ENCODE measurements at regions of chr15 and their contacts with region 1.

Region 1: DNA sequence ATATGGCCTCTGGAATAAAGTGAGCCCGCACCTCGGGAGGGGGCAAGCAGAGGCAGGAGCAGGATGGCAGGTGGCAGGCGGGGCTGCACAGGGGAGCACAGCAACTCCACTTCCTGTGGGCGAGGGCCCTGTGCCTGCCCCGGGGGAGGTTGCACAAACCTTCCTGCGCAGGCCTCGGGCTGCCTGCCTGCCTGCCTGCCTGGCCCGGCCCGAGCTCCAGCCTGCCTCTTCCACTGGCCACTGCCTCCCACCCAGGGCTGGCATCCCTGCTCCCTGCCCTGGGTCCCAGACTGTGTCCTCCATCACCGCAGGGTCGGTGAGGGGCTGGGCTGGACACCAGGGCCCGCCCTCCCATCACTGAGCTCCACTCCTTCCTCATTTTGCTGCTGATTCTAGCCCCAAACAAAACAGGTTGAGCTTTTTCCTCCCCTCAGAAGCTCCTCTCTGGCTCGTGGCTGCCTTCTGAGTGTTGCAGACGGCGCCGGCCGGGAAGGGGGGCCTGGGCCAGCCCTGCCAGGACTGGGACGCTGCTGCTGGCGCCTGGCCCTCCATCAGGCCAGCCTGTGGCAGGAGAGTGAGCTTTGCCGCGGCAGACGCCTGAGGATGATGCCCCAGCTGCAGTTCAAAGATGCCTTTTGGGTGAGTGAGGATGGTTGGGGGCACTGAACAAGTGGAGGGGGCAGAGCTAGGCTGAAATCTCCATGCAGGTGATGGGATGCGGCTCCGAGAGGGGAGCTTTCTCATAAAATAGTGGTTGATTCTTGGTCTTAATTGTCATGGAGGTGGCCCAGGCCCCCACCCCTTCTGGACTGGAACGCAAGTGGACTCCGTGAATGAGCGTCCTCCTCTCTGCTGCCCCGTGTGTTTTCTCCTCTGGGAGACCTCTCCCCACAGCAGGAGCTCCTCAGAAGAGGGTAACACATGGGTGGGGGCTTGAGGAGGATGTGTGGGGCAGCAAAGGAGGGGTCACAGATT is at the start of gene PSTPIP1:
- DNase-seq: peak; percentile 78
- ATAC-seq: peak; percentile 81
- H3K4me3 Mint-ChIP-seq: peak within 1 kb of the TSS; percentile 95
- H3K27ac Mint-ChIP-seq: peak within 1 kb of the TSS; percentile 95
- H3K4me1 Mint-ChIP-seq: peaks cover 55% of the 10 kb centered on the region
- H3K27me3 Mint-ChIP-seq: no peaks in the 10 kb centered on the region
- total RNA-seq, gene PSTPIP1: 238 to 241 TPM

Region 2: GRCh38 chr15:76931397-76932007 is 63.8 kb before region 1 on chr15 and contains the start of gene RCN2:
- POLR2A ChIA-PET with region 1: interaction called, 10 read pairs
- DNase-seq: peak; percentile 95
- ATAC-seq: peak; percentile 99
- H3K4me3 Mint-ChIP-seq: peak within 1 kb of the TSS; percentile 91
- H3K27ac Mint-ChIP-seq: peak within 1 kb of the TSS; percentile 90
- H3K4me1 Mint-ChIP-seq: peaks cover 28% of the 10 kb centered on the region
- H3K27me3 Mint-ChIP-seq: no peaks in the 10 kb centered on the region
- total RNA-seq, gene RCN2: 29.6 TPM

Region 3: GRCh38 chr15:76973362-76973743 is 21.9 kb before region 1 on chr15:
- POLR2A ChIA-PET with region 1: interaction called, 17 read pairs
- DNase-seq: peak; percentile 67
- ATAC-seq: peak; percentile 58
- H3K4me3 Mint-ChIP-seq: no peak overlapping the region
- H3K27ac Mint-ChIP-seq: no peak overlapping the region
- H3K4me1 Mint-ChIP-seq: peaks cover 27% of the 10 kb centered on the region
- H3K27me3 Mint-ChIP-seq: peaks cover 6% of the 10 kb centered on the region

Region 4: DNA sequence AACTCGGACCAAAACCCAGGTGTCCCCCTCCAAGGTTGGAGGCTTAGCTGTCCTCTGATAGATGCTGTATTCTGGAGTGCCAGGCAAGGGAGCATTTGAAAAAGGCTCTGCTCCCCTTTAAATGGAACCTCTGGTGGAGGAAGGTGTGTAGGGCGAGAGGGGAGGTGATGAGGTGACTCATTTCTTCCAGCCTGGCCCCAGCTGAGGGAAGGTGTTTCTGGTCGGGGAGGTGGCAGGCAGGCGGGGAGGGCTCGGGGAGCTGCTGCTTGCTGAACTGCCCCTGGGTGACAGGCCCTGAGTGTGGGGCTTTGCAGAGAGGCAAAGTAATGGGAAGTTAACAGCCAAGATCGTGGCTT is 18.5 kb after region 1 on chr15:
- POLR2A ChIA-PET with region 1: interaction called, 137 read pairs
- DNase-seq: peak; percentile 81
- ATAC-seq: peak; percentile 76
- H3K4me3 Mint-ChIP-seq: peak overlapping the region; percentile 88
- H3K27ac Mint-ChIP-seq: peak overlapping the region; percentile 96
- H3K4me1 Mint-ChIP-seq: peaks cover 78% of the 10 kb centered on the region
- H3K27me3 Mint-ChIP-seq: no peaks in the 10 kb centered on the region

Region 5: GRCh38 chr15:77024271-77025082 is 29.2 kb after region 1 on chr15:
- POLR2A ChIA-PET with region 1: interaction called, 49 read pairs
- DNase-seq: peak; percentile 82
- ATAC-seq: no peak
- H3K4me3 Mint-ChIP-seq: peak overlapping the region; percentile 40
- H3K27ac Mint-ChIP-seq: peak overlapping the region; percentile 98
- H3K4me1 Mint-ChIP-seq: peaks cover 53% of the 10 kb centered on the region
- H3K27me3 Mint-ChIP-seq: no peaks in the 10 kb centered on the region